ENCODE measurements at regions of chr17 and their contacts with region 1.

Region 1: GRCh38 chr17:35747540-35748017 is 5.5 kb downstream of the GAS2L2 start:
- DNase-seq: peak; percentile 86 to 95
- ATAC-seq: peak; percentile 71 to 91
- H3K4me3 ChIP-seq: no peak overlapping the region
- H3K27ac ChIP-seq: no peak overlapping the region
- H3K4me1 ChIP-seq: peaks cover 12% of the 10 kb centered on the region; the same call in 2 of the 3 replicates
- CTCF ChIP-seq: peak; percentile 96
- EP300 ChIP-seq: no peak
- POLR2A ChIP-seq: no peak
- RAD21 ChIP-seq: peak; percentile 97 to 99

Region 2: DNA sequence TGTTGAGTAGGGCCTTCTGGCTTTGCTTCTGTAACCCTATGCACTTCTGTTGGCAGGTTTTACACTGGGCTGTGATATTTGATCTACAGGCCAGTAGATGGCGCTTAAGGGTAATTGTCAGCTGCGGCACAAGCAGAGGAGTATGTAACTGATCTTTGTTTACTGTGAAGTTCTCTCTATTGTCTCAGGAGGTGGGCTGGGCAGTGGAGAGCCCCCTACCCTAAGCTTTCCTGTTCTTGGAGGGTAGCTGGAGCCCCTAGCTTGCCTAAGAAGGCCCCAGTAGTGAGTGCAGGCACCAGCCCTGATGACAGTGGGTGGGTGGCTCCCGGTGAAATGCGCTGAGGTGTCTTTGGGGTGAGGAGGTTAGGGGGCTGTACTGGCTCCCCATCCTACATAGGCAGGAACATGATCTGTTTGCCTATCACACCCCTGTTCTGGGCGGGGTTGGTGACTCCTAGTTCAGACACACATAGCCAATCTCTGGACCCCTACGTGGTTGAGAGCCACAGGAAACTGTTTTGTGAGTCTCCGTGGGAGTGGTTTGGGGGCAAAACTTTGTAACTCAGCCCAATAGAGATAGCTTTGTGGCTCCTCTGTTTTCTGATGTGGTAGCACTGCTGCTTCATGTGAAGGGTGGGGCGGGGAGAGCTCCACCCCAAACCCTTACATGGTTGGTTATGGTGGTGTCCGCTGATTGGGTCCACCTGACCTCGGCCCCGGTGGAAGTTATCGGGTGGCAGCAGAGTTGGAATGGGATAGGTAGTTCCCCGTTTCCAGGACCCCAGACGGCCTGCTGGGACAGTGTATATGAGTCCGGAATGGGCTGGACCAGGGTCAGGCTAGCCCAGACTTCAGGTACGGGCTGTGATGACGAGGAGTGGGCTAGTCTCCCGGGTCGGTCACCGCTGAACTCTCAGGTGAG is 434.5 kb before region 1 on chr17:
- CTCF ChIA-PET with region 1: interaction called, 11 read pairs
- POLR2A ChIA-PET with region 1: no interaction called
- DNase-seq: peak; percentile 69 to 77
- ATAC-seq: peak; percentile 96 to 98
- H3K4me3 ChIP-seq: no peak overlapping the region
- H3K27ac ChIP-seq: no peak overlapping the region
- H3K4me1 ChIP-seq: peaks cover 6% of the 10 kb centered on the region
- CTCF ChIP-seq: peak; percentile 89
- EP300 ChIP-seq: no peak
- POLR2A ChIP-seq: no peak
- RAD21 ChIP-seq: peak; percentile 90 to 94

Region 3: DNA sequence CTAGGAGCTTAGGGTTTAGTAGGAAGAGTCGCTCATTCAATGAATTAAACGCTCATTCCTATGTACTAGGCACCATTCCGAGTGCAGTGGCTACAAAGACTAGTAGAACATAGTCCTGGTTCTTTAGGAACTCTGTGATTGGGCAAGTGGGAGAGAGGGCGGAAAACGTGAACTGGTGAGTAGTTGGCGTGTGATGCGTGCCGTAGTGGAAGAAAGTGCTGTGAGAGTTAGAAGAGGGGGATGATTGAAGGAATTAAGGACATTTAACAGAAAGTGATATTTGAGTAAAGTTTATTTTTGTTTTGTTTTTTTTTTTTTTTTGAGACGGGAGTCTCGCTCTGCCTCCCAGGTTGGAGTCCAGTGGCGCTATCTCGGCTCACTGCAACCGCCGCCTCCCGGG is 179.0 kb before region 1 on chr17:
- CTCF ChIA-PET with region 1: interaction called, 14 read pairs
- POLR2A ChIA-PET with region 1: no interaction called
- DNase-seq: peak; percentile 54 to 60
- ATAC-seq: peak; percentile 78 to 85
- H3K4me3 ChIP-seq: peak overlapping the region; percentile 71
- H3K27ac ChIP-seq: peak overlapping the region; percentile 74 to 81
- H3K4me1 ChIP-seq: peaks cover 18% of the 10 kb centered on the region
- CTCF ChIP-seq: no peak
- EP300 ChIP-seq: no peak
- POLR2A ChIP-seq: no peak
- RAD21 ChIP-seq: no peak

Region 4: DNA sequence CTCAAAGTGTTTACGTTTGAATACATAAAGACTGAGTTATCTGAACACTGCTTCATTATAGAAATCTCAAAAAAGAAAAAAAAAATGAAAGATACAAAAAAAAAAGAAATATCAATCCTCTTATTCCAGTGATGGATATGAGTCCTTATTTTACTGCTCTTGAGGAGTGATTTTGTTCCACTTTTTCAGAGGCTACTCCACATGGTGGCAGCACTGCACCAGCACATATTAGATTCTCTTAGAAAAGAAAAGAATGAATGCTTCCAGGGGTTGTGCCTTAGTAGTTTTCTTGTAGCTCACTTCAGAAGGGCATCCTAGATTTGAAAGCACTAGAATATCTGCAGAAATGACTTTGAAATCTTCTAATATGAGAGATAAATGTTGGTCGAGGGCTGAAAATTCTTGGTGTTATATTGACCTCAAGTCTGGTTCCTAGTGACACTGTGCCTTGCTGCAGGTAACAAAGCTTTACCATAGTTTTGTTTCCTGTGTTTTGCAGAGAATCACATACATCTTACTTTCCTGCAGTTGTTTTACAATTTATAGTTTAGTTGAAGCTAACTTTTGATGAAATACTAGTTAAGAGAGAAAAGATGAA is 134.6 kb before region 1 on chr17:
- CTCF ChIA-PET with region 1: interaction called, 324 read pairs
- POLR2A ChIA-PET with region 1: interaction called, 15 read pairs
- DNase-seq: peak in 1 of 2 experiments; percentile 68
- ATAC-seq: peak; percentile 84 to 92; a peak in 5 of 6 replicates
- H3K4me3 ChIP-seq: no peak overlapping the region
- H3K27ac ChIP-seq: no peak overlapping the region
- H3K4me1 ChIP-seq: peaks cover 6% of the 10 kb centered on the region; the same call in 2 of the 3 replicates
- CTCF ChIP-seq: peak; percentile 91
- EP300 ChIP-seq: no peak
- POLR2A ChIP-seq: no peak
- RAD21 ChIP-seq: peak; percentile 72 to 76

Region 5: GRCh38 chr17:35666967-35667532 is 80.5 kb before region 1 on chr17:
- CTCF ChIA-PET with region 1: interaction called, 35 read pairs
- POLR2A ChIA-PET with region 1: no interaction called
- DNase-seq: no peak
- ATAC-seq: no peak
- H3K4me3 ChIP-seq: no peak overlapping the region
- H3K27ac ChIP-seq: no peak overlapping the region
- H3K4me1 ChIP-seq: no peaks in the 10 kb centered on the region
- CTCF ChIP-seq: no peak
- EP300 ChIP-seq: no peak
- POLR2A ChIP-seq: no peak
- RAD21 ChIP-seq: no peak

Region 6: GRCh38 chr17:35705705-35706104 is 41.9 kb before region 1 on chr17:
- CTCF ChIA-PET with region 1: interaction called, 19 read pairs
- POLR2A ChIA-PET with region 1: no interaction called
- DNase-seq: no peak
- ATAC-seq: peak; percentile 28 to 64; a peak in 4 of 6 replicates
- H3K4me3 ChIP-seq: no peak overlapping the region
- H3K27ac ChIP-seq: no peak overlapping the region; a peak in 2 of 6 replicates
- H3K4me1 ChIP-seq: peaks cover 31% of the 10 kb centered on the region
- CTCF ChIP-seq: no peak
- EP300 ChIP-seq: no peak
- POLR2A ChIP-seq: no peak
- RAD21 ChIP-seq: no peak